ENCODE measurements at regions of chr2 and their contacts with region 1.

Region 1: GRCh38 chr2:173612355-173612754 is 257.7 kb downstream of the CDCA7 start:
- DNase-seq: no peak
- ATAC-seq: no peak
- H3K4me3 ChIP-seq: no peak overlapping the region
- H3K4me3 Mint-ChIP-seq: no peak overlapping the region
- H3K27ac ChIP-seq: no peak overlapping the region
- H3K27ac Mint-ChIP-seq: no peak overlapping the region
- H3K4me1 ChIP-seq: no peaks in the 10 kb centered on the region
- H3K4me1 Mint-ChIP-seq: no peaks in the 10 kb centered on the region
- H3K27me3 ChIP-seq: no peaks in the 10 kb centered on the region
- H3K27me3 Mint-ChIP-seq: peaks cover 13% of the 10 kb centered on the region
- CTCF ChIP-seq: no peak

Region 2: GRCh38 chr2:173545364-173545763 is 67.0 kb before region 1 on chr2:
- CTCF ChIA-PET with region 1: no interaction called
- POLR2A ChIA-PET with region 1: no interaction called
- intact Hi-C with region 1: no loop called
- DNase-seq: no peak
- ATAC-seq: no peak
- H3K4me3 ChIP-seq: no peak overlapping the region
- H3K4me3 Mint-ChIP-seq: no peak overlapping the region
- H3K27ac ChIP-seq: no peak overlapping the region
- H3K27ac Mint-ChIP-seq: no peak overlapping the region
- H3K4me1 ChIP-seq: no peaks in the 10 kb centered on the region
- H3K4me1 Mint-ChIP-seq: no peaks in the 10 kb centered on the region
- H3K27me3 ChIP-seq: peaks cover 0 to 2% of the 10 kb centered on the region in 2 experiments
- H3K27me3 Mint-ChIP-seq: peaks cover 10% of the 10 kb centered on the region
- CTCF ChIP-seq: no peak

Region 3: GRCh38 chr2:173644146-173644545 is 31.8 kb after region 1 on chr2:
- CTCF ChIA-PET with region 1: no interaction called
- POLR2A ChIA-PET with region 1: no interaction called
- intact Hi-C with region 1: loop called in 1 of 2 experiments (anchors 1 kb)
- DNase-seq: no peak
- ATAC-seq: no peak
- H3K4me3 ChIP-seq: no peak overlapping the region
- H3K4me3 Mint-ChIP-seq: no peak overlapping the region
- H3K27ac ChIP-seq: no peak overlapping the region
- H3K27ac Mint-ChIP-seq: no peak overlapping the region
- H3K4me1 ChIP-seq: no peaks in the 10 kb centered on the region
- H3K4me1 Mint-ChIP-seq: no peaks in the 10 kb centered on the region
- H3K27me3 ChIP-seq: no peaks in the 10 kb centered on the region
- H3K27me3 Mint-ChIP-seq: peaks cover 2% of the 10 kb centered on the region
- CTCF ChIP-seq: no peak